ENCODE measurements at regions of chr2 and their contacts with region 1.

Region 1: GRCh38 chr2:113940891-113941290 is 51.0 kb downstream of the ACTR3 start:
- DNase-seq: no peak
- H3K4me3 Mint-ChIP-seq: no peak overlapping the region
- H3K27ac Mint-ChIP-seq: no peak overlapping the region
- H3K4me1 Mint-ChIP-seq: peaks cover 4% of the 10 kb centered on the region
- H3K27me3 Mint-ChIP-seq: no peaks in the 10 kb centered on the region

Region 2: GRCh38 chr2:113124181-113124961 is 816.5 kb before region 1 on chr2:
- CTCF ChIA-PET with region 1: no interaction called
- POLR2A ChIA-PET with region 1: no interaction called
- DNase-seq: no peak
- H3K4me3 Mint-ChIP-seq: no peak overlapping the region
- H3K27ac Mint-ChIP-seq: no peak overlapping the region
- H3K4me1 Mint-ChIP-seq: peaks cover 47% of the 10 kb centered on the region
- H3K27me3 Mint-ChIP-seq: no peaks in the 10 kb centered on the region

Region 3: GRCh38 chr2:113858764-113859163 is 82.1 kb before region 1 on chr2:
- CTCF ChIA-PET with region 1: no interaction called
- POLR2A ChIA-PET with region 1: no interaction called
- DNase-seq: no peak
- H3K4me3 Mint-ChIP-seq: no peak overlapping the region
- H3K27ac Mint-ChIP-seq: no peak overlapping the region
- H3K4me1 Mint-ChIP-seq: no peaks in the 10 kb centered on the region
- H3K27me3 Mint-ChIP-seq: peaks cover 2% of the 10 kb centered on the region

Region 4: DNA sequence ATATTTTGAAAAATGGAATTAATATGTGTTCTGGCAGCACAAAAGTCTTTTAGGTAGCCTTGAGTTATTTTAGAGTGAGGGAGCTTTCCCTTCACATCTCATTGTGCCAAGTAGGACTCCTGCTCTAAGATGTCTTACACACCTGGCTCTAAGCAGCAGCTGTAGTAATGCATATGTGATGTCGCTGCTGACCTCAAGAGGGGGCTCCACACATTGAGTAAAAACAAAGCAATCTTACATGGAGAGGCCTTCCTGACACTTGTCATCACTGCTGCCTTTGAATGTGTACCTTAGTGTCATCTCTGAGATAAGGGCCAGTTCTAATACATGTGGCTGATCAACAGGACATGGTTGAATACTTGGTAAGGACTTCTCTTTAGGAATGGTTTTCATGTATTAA is 24.8 kb after region 1 on chr2:
- CTCF ChIA-PET with region 1: no interaction called
- POLR2A ChIA-PET with region 1: interaction called, 22 read pairs
- DNase-seq: no peak
- H3K4me3 Mint-ChIP-seq: no peak overlapping the region
- H3K27ac Mint-ChIP-seq: no peak overlapping the region
- H3K4me1 Mint-ChIP-seq: peaks cover 2% of the 10 kb centered on the region
- H3K27me3 Mint-ChIP-seq: no peaks in the 10 kb centered on the region

Region 5: GRCh38 chr2:113976277-113976928 is 35.5 kb after region 1 on chr2:
- CTCF ChIA-PET with region 1: no interaction called
- POLR2A ChIA-PET with region 1: no interaction called
- DNase-seq: no peak
- H3K4me3 Mint-ChIP-seq: no peak overlapping the region
- H3K27ac Mint-ChIP-seq: peak overlapping the region; percentile 50
- H3K4me1 Mint-ChIP-seq: peaks cover 14% of the 10 kb centered on the region
- H3K27me3 Mint-ChIP-seq: no peaks in the 10 kb centered on the region

Region 6: DNA sequence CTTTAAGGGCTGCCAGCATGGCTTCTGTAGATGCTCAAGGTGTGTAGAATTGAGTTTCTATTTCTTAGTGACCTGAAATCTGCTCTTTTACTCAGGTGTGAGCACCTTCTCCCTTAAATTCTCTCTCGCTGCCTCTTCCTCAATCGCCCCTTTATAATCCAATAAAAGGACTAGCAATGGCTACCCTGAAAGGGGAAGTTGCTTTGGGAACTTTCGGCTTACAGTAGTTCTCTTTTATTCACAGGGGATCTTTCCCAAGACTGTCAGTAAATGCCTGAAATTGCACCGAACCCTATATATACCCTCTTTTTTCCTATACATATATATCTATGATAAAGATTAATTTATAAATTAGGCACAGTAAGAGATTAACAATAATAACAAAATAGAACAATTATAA is 70.8 kb after region 1 on chr2:
- CTCF ChIA-PET with region 1: no interaction called
- POLR2A ChIA-PET with region 1: no interaction called
- DNase-seq: no peak
- H3K4me3 Mint-ChIP-seq: no peak overlapping the region
- H3K27ac Mint-ChIP-seq: no peak overlapping the region
- H3K4me1 Mint-ChIP-seq: no peaks in the 10 kb centered on the region
- H3K27me3 Mint-ChIP-seq: peaks cover 14% of the 10 kb centered on the region